Sigmoid colon (tissue), 7 donors: ENCODE measurements at regions of chr4 and their contacts with region 1.

Region 1: DNA sequence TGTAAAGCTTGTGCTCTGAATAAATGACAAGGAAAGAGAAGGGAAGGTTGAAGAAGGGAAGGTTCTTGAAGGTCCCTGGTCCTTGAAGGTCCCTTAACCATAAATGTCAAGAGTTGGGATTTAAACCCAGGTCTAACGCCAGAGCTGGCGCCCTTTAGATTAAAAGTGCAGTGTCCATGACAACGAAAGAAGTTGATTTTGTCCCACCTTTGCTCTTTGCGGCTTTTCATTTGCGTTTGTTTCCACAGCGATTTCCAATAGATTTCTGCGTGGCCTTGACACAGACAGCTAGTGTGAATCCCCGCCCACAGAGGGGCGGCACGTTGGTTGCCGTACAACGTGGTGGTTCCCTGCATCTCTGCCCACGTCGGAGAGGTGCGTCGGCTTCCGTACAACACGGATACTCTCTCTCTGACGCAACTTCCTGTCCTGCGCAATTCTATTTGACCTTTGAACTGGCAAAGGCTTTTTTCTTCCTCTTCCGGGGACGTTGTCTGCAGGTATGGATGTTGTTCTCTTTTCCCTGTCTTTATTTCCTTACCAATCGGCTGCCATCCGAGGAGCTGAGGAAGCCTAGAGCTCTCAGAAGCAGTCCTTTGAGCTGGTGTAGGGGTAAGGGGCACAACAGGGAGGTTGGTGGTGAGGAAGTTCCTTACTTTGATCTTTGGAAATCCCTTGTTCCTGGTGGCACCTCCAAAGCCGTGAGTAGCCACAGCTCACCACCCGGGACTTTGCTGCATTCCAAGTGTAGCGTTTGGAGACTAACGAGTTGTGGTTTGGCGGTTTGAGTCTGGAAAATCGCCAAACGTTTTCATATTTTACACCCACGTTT is at the start of gene RPL34:
- DNase-seq: peak; percentile 99
- H3K4me3 ChIP-seq: peak within 1 kb of the TSS; percentile 62 to 83 (median 70)
- H3K27ac ChIP-seq: peak within 1 kb of the TSS; percentile 80 to 90 (median 86)
- H3K4me1 ChIP-seq: peaks cover 0 to 33% (median 17%) of the 10 kb centered on the region in 4 donors
- H3K27me3 ChIP-seq: no peaks in the 10 kb centered on the region
- CTCF ChIP-seq: no peak
- EP300 ChIP-seq: peak in 2 of 4 donors; percentile 44 to 63
- POLR2A ChIP-seq: peak; percentile 96 to 97
- total RNA-seq, gene RPL34: 926 to 1,691 (median 1,619) TPM

Region 2: GRCh38 chr4:108443585-108443984 is 176.7 kb before region 1 on chr4:
- intact Hi-C with region 1: no loop called
- DNase-seq: no peak
- H3K4me3 ChIP-seq: no peak overlapping the region
- H3K27ac ChIP-seq: no peak overlapping the region
- H3K4me1 ChIP-seq: no peaks in the 10 kb centered on the region
- H3K27me3 ChIP-seq: no peaks in the 10 kb centered on the region
- CTCF ChIP-seq: no peak
- EP300 ChIP-seq: no peak
- POLR2A ChIP-seq: no peak

Region 3: DNA sequence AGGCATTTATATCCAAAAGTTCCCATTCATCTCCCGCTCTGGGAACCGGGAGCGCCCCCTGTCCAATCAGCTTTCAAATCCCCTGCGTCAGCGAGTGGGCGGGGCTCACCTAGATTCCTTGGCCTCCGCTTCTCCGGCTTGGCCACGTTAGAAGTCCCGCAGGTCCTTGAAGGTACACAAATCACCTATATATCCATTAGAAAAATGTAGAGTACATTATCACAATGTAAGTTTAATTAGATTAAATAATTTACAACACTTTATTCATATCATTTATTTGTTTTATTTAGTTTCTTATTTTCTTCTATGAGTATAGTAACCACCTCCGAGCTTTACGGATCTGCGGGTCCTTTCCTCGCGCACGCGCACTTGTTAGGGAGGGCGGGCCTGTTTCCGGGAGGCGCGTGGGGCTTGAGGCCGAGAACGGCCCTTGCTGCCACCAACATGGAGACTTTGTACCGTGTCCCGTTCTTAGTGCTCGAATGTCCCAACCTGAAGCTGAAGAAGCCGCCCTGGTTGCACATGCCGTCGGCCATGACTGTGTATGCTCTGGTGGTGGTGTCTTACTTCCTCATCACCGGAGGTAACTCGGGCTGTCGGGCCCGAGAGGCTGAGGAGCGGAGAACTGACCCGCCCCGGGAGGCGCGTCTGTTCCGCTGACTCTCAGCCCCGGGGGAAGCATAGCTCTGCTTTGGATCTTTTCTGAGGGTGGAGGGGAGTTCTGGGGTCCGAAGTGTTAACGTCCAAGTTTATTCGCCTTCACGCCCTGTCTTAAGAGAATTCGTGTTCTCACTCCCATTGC is 30.1 kb after region 1 on chr4 and contains the start of gene OSTC:
- intact Hi-C with region 1: loop called (anchors 2 kb)
- DNase-seq: peak; percentile 98
- H3K4me3 ChIP-seq: peak within 1 kb of the TSS; percentile 61 to 83 (median 82)
- H3K27ac ChIP-seq: peak within 1 kb of the TSS; percentile 81 to 88 (median 84)
- H3K4me1 ChIP-seq: peaks cover 0 to 35% (median 23%) of the 10 kb centered on the region in 4 donors
- H3K27me3 ChIP-seq: no peaks in the 10 kb centered on the region
- CTCF ChIP-seq: no peak
- EP300 ChIP-seq: no peak
- POLR2A ChIP-seq: peak; percentile 40 to 43
- total RNA-seq, gene OSTC: 52.6 to 80.4 (median 75.4) TPM

Region 4: DNA sequence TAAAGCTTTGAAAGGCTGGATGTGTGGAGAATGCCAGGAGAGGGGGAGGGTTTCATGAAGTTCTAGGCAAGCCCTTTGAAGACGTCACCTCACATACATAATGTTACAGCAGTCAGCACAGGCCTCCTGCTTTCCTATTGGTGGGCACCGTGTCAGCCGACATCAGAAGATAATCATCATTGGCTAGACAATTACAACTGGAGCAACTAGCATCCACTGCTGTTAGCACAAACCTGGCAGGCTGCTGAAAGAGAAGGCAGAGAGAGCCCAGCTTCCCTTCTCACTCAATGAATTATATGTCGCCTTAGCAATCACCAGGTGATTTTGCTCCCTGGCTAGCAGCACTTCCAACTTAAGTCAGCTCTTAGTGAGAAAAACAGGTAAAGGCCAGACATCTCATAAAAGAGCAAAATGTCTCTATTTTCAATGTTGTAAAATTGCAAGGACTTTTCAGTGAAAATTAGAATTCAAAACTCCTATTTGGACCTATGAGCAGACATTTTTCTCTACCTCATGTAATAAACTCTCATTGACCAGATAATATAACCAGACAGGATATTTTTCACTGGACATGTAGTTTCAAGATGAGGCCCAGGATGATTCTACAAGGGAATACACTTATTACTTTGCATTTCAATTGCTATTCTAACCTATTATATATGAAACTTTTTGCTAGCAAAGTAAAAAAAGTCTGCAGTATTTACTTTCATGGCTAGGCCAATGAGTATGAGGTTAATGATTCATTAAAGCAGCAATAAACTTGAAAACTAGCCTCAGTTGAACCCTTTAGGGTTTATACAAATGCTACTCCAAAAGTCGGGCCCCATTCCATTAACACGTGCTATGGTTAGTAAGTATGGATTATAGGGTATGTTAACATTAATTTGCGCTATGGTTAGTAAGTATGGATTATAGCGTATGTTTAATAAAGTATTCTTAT is 1573.8 kb after region 1 on chr4:
- intact Hi-C with region 1: loop called (anchors 10 kb)
- DNase-seq: peak; percentile 83
- H3K4me3 ChIP-seq: no peak overlapping the region
- H3K27ac ChIP-seq: peak overlapping the region in 3 of 4 donors; percentile 8 to 35 (median 26)
- H3K4me1 ChIP-seq: peaks cover 0 to 22% (median 14%) of the 10 kb centered on the region in 4 donors
- H3K27me3 ChIP-seq: no peaks in the 10 kb centered on the region
- CTCF ChIP-seq: no peak
- EP300 ChIP-seq: no peak
- POLR2A ChIP-seq: peak; percentile 14 to 52